GM12878 (cell line): ENCODE measurements at regions of chr6 and their contacts with region 1.

Region 1: DNA sequence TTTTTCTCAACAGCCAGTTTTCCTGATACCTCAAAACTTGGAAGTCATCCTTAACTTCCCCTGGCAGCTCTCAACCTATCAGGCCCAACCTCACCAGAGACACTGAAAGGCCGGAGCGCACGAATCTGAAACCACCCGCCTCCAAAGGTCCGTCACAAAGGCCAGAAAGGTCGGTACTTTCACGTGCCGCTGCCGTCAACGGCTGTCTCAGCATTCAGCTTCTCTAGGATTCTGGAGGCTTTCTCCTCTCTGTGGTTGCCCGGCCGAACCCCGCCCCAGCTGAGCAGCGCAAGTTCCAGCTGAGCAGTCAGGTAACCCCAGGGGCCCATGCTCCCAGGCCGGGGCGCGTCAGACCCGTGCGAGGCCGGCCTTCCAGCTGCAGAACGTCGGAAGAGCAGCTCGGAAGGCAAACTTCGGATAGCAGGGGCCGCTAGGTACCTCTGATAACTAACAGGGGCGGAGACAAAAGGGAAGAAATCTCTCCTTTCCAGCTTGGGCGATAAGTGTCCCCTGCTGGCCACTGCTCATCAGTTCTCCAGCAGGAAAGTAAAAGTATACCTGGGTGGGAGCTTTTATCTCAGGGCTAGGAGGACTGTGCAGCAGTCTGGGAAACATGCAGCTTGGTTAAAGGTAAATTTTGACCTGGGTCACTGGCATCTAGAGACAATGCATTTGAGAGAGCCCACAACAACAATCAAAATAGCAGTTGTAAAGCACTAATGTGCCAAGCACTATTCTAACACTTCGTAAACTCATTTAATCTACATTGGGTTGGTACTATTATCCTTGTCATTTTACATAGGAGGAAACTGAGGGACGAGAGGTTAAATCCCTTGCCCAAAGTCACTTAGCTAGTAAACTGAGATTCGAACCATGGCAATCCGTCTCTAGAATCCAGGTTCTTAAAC is 16.1 kb downstream of the ZSCAN12 start:
- DNase-seq: no peak
- ATAC-seq: peak; percentile 97
- H3K4me3 ChIP-seq: peak overlapping the region; percentile 38; the same call in 1 of the 2 replicates
- H3K27ac ChIP-seq: peak overlapping the region; percentile 50; the same call in 1 of the 2 replicates
- H3K4me1 ChIP-seq: no peaks in the 10 kb centered on the region
- H3K27me3 ChIP-seq: no peaks in the 10 kb centered on the region
- CTCF ChIP-seq: peak; percentile 41 to 47 (median 42); a peak in 5 of 6 replicates
- EP300 ChIP-seq: peak; percentile 72 to 74; a peak in 2 of 4 replicates
- POLR2A ChIP-seq: peak; percentile 66
- RAD21 ChIP-seq: peak; percentile 49

Region 2: GRCh38 chr6:28371706-28372451 is 11.6 kb before region 1 on chr6:
- CTCF ChIA-PET with region 1: interaction called, 27 read pairs
- POLR2A ChIA-PET with region 1: interaction called, 10 read pairs
- RAD21 ChIA-PET with region 1: interaction called, 16 read pairs
- SMC1A ChIA-PET with region 1: interaction called, 35 read pairs
- in situ Hi-C with region 1: no loop called
- intact Hi-C with region 1: no loop called
- DNase-seq: peak; percentile 39
- ATAC-seq: peak; percentile 95
- H3K4me3 ChIP-seq: no peak overlapping the region
- H3K27ac ChIP-seq: no peak overlapping the region
- H3K4me1 ChIP-seq: peaks cover 14% of the 10 kb centered on the region
- H3K27me3 ChIP-seq: no peaks in the 10 kb centered on the region
- CTCF ChIP-seq: no peak
- EP300 ChIP-seq: no peak
- POLR2A ChIP-seq: no peak
- RAD21 ChIP-seq: no peak

Region 3: DNA sequence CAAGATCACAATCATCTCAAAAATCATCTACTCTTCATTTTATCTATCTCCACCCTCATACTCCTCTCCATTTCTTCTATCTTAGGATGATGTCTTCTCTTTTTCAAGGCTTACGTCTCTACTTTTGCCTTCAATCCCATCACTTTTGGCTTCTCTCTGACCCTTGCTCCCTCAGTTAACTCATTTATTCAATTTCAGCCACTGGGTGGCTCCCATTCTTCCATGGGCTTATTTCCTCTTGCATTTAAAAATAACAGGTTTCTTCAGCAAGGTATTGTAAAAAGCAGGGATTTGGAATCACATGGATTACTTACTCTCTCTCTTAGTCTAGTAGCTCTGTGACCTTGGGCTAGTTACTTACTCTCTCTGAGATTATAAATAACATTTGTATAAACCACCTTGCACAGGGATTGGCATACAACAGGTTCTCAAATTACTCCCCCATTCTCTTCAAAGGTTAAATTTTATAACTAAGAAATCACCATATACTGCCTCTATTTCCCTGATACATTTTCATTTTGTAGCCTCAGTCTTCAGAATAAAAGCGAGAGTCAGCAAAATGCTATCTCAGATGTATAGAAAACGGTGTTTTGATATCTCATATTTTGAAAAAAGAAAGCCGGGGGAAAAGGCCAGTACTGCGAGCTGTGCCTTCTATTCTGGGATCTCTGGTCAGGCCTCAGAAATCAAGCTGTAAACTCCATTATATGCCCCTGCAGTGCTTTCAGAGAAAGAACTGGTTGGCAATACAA is 10.6 kb after region 1 on chr6:
- CTCF ChIA-PET with region 1: interaction called, 59 read pairs
- POLR2A ChIA-PET with region 1: interaction called, 7 read pairs
- RAD21 ChIA-PET with region 1: interaction called, 5 read pairs
- SMC1A ChIA-PET with region 1: interaction called, 30 read pairs
- in situ Hi-C with region 1: no loop called
- intact Hi-C with region 1: loop called (anchors 2 kb)
- DNase-seq: no peak
- ATAC-seq: no peak
- H3K4me3 ChIP-seq: no peak overlapping the region
- H3K27ac ChIP-seq: no peak overlapping the region
- H3K4me1 ChIP-seq: peaks cover 4% of the 10 kb centered on the region; the same call in 1 of the 2 replicates
- H3K27me3 ChIP-seq: no peaks in the 10 kb centered on the region
- CTCF ChIP-seq: peak; percentile 10 to 33 (median 22); a peak in 4 of 6 replicates
- EP300 ChIP-seq: no peak
- POLR2A ChIP-seq: no peak
- RAD21 ChIP-seq: 0 out of 2 replicates have a peak, but pooled peaks have one; percentile 9

Region 4: GRCh38 chr6:28433119-28433518 is 49.6 kb after region 1 on chr6:
- CTCF ChIA-PET with region 1: no interaction called
- POLR2A ChIA-PET with region 1: no interaction called
- RAD21 ChIA-PET with region 1: no interaction called
- SMC1A ChIA-PET with region 1: no interaction called
- in situ Hi-C with region 1: no loop called
- intact Hi-C with region 1: no loop called
- DNase-seq: no peak
- ATAC-seq: no peak
- H3K4me3 ChIP-seq: no peak overlapping the region
- H3K27ac ChIP-seq: no peak overlapping the region
- H3K4me1 ChIP-seq: no peaks in the 10 kb centered on the region
- H3K27me3 ChIP-seq: no peaks in the 10 kb centered on the region
- CTCF ChIP-seq: no peak; a peak in 1 of 6 replicates
- EP300 ChIP-seq: no peak
- POLR2A ChIP-seq: no peak
- RAD21 ChIP-seq: no peak